ENCODE measurements at regions of chr11 and their contacts with region 1.

Region 1: DNA sequence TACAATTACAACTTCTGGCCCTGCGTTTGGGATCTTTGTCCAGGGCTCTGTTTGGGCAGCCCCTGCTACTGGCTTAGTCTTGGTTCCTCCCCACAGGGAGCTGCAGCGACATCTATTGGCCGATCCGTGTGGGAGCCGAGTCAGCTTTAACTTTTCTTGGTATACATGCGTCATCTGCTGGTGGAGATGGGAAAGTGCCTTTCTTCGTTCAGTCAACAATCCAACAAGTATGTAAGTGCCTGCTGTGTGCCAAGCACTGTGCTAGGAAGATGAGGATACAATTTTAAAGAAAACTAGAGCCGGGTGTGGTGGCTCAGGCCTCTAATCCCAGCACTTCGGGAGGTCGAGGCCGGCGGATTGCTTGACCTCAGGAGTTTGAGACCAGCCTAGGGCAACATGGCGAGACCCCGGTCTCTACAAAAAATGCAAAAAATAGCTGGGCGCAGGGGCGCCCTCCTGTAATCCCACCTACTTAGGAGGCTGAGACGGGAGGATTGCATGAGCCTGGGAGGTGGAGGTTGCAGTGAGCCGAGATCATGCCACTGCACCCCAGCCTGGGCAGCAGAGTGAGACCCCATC is 8.2 kb downstream of the TPBGL start:
- DNase-seq: peak; percentile 89
- ATAC-seq: peak; percentile 88
- H3K4me3 ChIP-seq: no peak overlapping the region
- H3K27ac ChIP-seq: no peak overlapping the region
- H3K4me1 ChIP-seq: peaks cover 3% of the 10 kb centered on the region; the same call in 1 of the 2 replicates
- H3K27me3 ChIP-seq: no peaks in the 10 kb centered on the region
- CTCF ChIP-seq: peak; percentile 100

Region 2: GRCh38 chr11:75147875-75148263 is 100.9 kb before region 1 on chr11:
- CTCF ChIA-PET with region 1: interaction called, 83 read pairs
- POLR2A ChIA-PET with region 1: no interaction called
- in situ Hi-C with region 1: no loop called
- intact Hi-C with region 1: no loop called
- DNase-seq: no peak
- ATAC-seq: no peak
- H3K4me3 ChIP-seq: no peak overlapping the region
- H3K27ac ChIP-seq: no peak overlapping the region
- H3K4me1 ChIP-seq: peaks cover 7% of the 10 kb centered on the region
- H3K27me3 ChIP-seq: peaks cover 2% of the 10 kb centered on the region; the same call in 1 of the 2 replicates
- CTCF ChIP-seq: no peak

Region 3: DNA sequence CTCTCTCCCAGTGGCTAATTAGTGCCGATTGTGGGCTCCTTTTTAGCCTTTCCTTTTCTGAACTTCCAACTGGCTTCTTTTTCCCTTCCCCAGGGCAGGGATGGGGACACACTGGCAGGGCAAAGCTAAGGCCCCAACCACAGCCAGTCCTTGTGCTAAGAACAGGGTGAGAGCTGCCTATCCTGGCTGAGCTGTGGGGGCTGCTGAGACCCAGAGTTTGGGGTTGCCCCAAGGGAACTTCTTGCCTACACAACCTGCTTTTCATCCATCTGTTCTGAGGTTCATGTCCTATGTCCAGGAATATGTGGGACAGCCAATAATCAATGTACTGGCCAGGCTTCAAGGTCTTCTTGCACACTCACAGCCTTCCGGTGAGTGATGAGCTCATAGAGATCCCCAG is 18.2 kb before region 1 on chr11:
- CTCF ChIA-PET with region 1: no interaction called
- POLR2A ChIA-PET with region 1: no interaction called
- in situ Hi-C with region 1: no loop called
- intact Hi-C with region 1: no loop called
- DNase-seq: no peak
- ATAC-seq: no peak
- H3K4me3 ChIP-seq: no peak overlapping the region
- H3K27ac ChIP-seq: no peak overlapping the region
- H3K4me1 ChIP-seq: no peaks in the 10 kb centered on the region
- H3K27me3 ChIP-seq: no peaks in the 10 kb centered on the region
- CTCF ChIP-seq: no peak